PC-9 (cell line): ENCODE measurements at regions of chr16 and their contacts with region 1.

Region 1: DNA sequence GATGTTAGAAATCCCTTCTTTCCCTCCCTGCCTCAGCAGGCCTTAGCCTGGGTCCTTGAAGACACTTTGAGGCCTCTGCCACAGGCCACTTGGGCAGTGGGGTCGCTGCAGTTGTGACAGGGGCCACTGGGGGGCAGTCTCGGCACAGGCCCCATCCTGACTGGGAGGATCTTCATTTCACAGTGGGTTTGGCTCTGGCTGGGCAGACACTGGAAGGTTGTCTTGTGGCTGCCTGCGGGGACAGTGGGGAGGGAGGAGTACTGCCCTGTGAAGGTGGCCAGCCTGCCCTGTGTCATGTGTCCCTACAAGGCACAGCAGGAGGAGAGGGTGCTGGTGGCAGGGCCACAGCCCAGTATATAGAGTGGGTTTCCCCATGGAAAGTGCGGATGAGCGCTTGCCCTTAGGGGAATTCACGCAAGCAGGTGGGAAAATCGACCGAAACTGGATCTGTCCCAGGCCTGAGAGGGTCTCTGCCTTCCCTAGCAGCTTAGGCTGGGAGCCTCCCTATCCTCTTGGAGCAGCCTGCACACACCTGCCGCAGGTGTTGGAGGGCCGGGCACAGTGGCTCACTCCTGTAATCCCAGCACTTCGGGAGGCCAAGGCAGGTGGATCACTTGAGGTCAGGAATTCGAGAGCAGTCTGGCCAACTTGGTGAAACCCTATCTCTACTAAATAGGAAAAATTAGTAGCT is 28.8 kb downstream of the GINS2 start:
- DNase-seq: peak in 1 of 2 experiments; percentile 68
- H3K4me3 ChIP-seq: no peak overlapping the region
- H3K27ac ChIP-seq: no peak overlapping the region
- H3K4me1 ChIP-seq: no peaks in the 10 kb centered on the region
- H3K27me3 ChIP-seq: no peaks in the 10 kb centered on the region
- CTCF ChIP-seq: peak; percentile 88

Region 2: GRCh38 chr16:86059253-86060171 is 399.6 kb after region 1 on chr16:
- CTCF ChIA-PET with region 1: interaction called, 10 read pairs
- POLR2A ChIA-PET with region 1: no interaction called
- intact Hi-C with region 1: no loop called
- DNase-seq: no peak
- H3K4me3 ChIP-seq: no peak overlapping the region
- H3K27ac ChIP-seq: no peak overlapping the region
- H3K4me1 ChIP-seq: no peaks in the 10 kb centered on the region
- H3K27me3 ChIP-seq: peaks cover 89% of the 10 kb centered on the region
- CTCF ChIP-seq: no peak